ENCODE measurements at regions of chr22 and their contacts with region 1.

Region 1: GRCh38 chr22:30649430-30650007 is 13.9 kb downstream of the SLC35E4 start:
- DNase-seq: peak; percentile 45
- ATAC-seq: peak; percentile 99
- H3K4me3 Mint-ChIP-seq: no peak overlapping the region
- H3K27ac Mint-ChIP-seq: peak overlapping the region; percentile 66
- H3K4me1 Mint-ChIP-seq: peaks cover 12% of the 10 kb centered on the region
- H3K27me3 Mint-ChIP-seq: no peaks in the 10 kb centered on the region
- CTCF ChIP-seq: no peak

Region 2: DNA sequence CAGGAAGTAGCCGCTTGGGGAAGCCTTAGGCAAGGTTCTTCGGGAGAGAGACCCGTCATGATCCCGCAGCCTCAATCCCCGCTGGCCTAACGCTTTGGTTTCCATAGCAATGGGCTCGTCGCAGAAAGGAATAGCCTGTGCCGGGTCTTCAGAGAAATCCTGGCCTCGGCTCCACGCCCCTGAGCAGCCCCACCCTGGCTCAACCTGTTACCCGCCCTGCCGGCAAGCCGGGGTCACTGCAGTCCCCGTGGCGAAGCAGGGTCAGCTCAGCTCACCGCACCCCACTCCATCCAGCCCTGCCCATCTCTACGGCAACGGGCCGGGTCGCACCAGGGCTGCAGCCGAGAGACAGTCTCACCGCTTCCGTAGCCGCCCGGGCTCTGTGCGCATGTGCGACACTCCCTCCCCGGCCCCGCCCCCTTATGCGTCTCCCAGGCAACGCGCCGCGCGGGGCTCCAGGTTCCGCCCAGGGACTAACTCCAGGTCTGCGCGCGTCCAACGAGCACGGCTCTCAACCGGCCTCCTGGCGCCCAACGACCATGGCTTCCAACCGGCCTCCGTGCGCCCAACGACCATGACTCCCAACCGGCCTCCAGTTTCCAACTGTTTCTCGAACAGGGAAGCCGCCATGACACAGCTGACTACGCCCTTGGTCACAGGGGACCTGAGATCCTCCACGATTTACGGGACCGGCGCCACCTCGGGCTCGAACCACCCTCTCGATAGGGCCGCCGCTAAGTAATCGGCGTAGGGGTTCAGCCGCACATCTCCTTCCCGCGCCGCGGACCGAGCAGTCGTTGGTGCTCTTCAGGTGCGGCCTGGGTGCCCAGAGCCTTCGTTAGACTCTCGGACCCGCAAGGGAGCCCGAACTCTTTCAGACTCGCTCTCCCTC is 18.2 kb after region 1 on chr22 and contains the start of gene DUSP18:
- CTCF ChIA-PET with region 1: no interaction called
- POLR2A ChIA-PET with region 1: no interaction called
- intact Hi-C with region 1: loop called (anchors 1 kb)
- DNase-seq: peak; percentile 95
- ATAC-seq: peak; percentile 94
- H3K4me3 Mint-ChIP-seq: peak within 1 kb of the TSS; percentile 97
- H3K27ac Mint-ChIP-seq: peak within 1 kb of the TSS; percentile 86
- H3K4me1 Mint-ChIP-seq: peaks cover 18% of the 10 kb centered on the region
- H3K27me3 Mint-ChIP-seq: no peaks in the 10 kb centered on the region
- CTCF ChIP-seq: no peak
- total RNA-seq, gene DUSP18: 12.0 and 13.5 TPM in 2 replicates